CD4-positive, alpha-beta memory T cell (primary cell): ENCODE measurements at regions of chr1 and their contacts with region 1.

Region 1: GRCh38 chr1:169711469-169712281 is at the start of gene SELL:
- DNase-seq: peak; percentile 75 to 83 (median 78)
- H3K4me3 ChIP-seq: peak within 1 kb of the TSS; percentile 55 to 61
- H3K4me3 Mint-ChIP-seq: peak within 1 kb of the TSS; percentile 87 to 96 (median 92)
- H3K27ac ChIP-seq: peak within 1 kb of the TSS; percentile 48
- H3K27ac Mint-ChIP-seq: peak within 1 kb of the TSS; percentile 70 to 95 (median 86)
- H3K4me1 ChIP-seq: peaks cover 18% of the 10 kb centered on the region
- H3K4me1 Mint-ChIP-seq: peaks cover 16 to 28% (median 24%) of the 10 kb centered on the region in 4 donors
- H3K27me3 ChIP-seq: no peaks in the 10 kb centered on the region
- H3K27me3 Mint-ChIP-seq: peaks cover 3 to 4% of the 10 kb centered on the region in 2 donors
- total RNA-seq, gene SELL: 378 to 396 TPM

Region 2: GRCh38 chr1:169466259-169467230 is 245.1 kb before region 1 on chr1:
- CTCF ChIA-PET with region 1: interaction called, 3 read pairs
- POLR2A ChIA-PET with region 1: no interaction called
- intact Hi-C with region 1: loop called (anchors 5 kb)
- DNase-seq: peak in 2 of 5 donors; percentile 12 to 24
- H3K4me3 ChIP-seq: no peak overlapping the region
- H3K4me3 Mint-ChIP-seq: no peak overlapping the region
- H3K27ac ChIP-seq: no peak overlapping the region
- H3K27ac Mint-ChIP-seq: peak overlapping the region in 1 of 7 donors; percentile 17
- H3K4me1 ChIP-seq: no peaks in the 10 kb centered on the region
- H3K4me1 Mint-ChIP-seq: no peaks in the 10 kb centered on the region
- H3K27me3 ChIP-seq: no peaks in the 10 kb centered on the region
- H3K27me3 Mint-ChIP-seq: no peaks in the 10 kb centered on the region

Region 3: GRCh38 chr1:169546087-169546995 is 165.3 kb before region 1 on chr1:
- CTCF ChIA-PET with region 1: interaction called, 86 read pairs
- POLR2A ChIA-PET with region 1: interaction called, 12 read pairs
- intact Hi-C with region 1: loop called (anchors 1 kb)
- DNase-seq: peak; percentile 65 to 68 (median 66)
- H3K4me3 ChIP-seq: no peak overlapping the region
- H3K4me3 Mint-ChIP-seq: no peak overlapping the region
- H3K27ac ChIP-seq: no peak overlapping the region
- H3K27ac Mint-ChIP-seq: no peak overlapping the region
- H3K4me1 ChIP-seq: no peaks in the 10 kb centered on the region
- H3K4me1 Mint-ChIP-seq: peaks cover 0 to 2% (median under 1%) of the 10 kb centered on the region in 4 donors
- H3K27me3 ChIP-seq: no peaks in the 10 kb centered on the region
- H3K27me3 Mint-ChIP-seq: no peaks in the 10 kb centered on the region

Region 4: DNA sequence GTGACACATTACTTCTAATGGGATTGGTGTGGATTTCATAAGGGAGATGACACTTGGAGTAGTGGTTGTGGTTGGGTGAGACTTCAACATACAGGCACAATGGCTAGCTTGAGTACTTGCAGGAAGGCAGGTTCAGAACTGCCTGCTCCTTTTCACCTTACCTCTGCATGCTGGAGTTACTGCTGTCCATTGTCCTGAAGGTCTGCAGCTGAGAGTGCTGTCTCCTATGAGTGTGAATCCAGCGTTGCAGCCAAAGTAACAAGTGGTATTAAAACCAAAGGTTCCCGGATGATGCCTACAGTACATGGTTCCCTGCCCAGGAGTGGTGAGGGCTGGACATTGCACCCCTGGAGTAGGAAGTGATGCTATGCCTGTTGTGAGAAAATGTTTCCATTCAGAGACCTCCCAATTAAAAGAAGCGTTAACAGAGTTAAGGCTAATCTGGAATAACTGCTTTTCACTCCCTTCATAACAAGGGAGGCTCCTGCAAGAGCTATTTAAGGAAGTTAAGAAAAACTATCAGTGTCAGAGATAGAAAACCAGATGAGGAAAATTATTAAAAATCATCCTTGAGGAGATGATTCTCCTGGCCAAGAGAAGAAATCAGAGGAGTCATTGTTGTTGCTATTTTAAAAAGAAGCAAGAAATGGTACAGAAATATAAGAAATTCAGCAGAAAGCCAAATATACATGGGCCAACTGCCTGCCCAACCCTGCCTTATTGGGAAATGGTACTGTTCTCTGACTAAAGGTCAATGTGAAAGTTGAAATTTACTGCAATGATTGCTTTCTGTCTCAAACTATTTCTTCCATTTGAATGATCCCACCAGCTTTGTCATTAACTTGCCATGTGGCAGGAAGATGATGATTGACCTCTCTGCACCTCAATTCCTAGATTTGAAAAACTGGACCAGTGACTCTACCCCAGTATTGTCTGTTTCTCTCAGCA is 115.6 kb before region 1 on chr1:
- CTCF ChIA-PET with region 1: interaction called, 246 read pairs
- POLR2A ChIA-PET with region 1: interaction called, 78 read pairs
- intact Hi-C with region 1: loop called (anchors 1 kb)
- DNase-seq: peak in 1 of 5 donors; percentile 9
- H3K4me3 ChIP-seq: no peak overlapping the region
- H3K4me3 Mint-ChIP-seq: no peak overlapping the region
- H3K27ac ChIP-seq: no peak overlapping the region
- H3K27ac Mint-ChIP-seq: no peak overlapping the region
- H3K4me1 ChIP-seq: peaks cover 8% of the 10 kb centered on the region
- H3K4me1 Mint-ChIP-seq: peaks cover 4 to 7% (median 5%) of the 10 kb centered on the region in 4 donors
- H3K27me3 ChIP-seq: no peaks in the 10 kb centered on the region
- H3K27me3 Mint-ChIP-seq: no peaks in the 10 kb centered on the region

Region 5: DNA sequence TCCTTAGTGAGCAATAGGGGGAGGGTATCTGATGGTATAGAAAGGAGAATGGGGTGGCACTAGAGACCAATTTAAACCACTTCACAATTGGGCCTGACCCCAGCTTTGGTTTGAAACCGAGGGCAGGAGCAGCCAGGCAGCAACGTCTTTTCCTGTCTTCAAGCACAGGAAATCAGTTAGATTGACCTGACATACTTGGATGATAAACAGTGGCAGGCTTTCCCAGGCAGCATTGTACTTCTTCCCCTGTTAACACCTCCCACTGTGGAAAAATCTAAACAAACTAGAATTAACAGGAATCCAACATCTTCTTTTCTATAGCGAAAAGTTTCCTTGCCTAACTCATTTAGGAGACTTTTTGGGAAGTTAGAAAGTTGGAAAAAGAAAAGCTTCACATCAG is 40.8 kb before region 1 on chr1:
- CTCF ChIA-PET with region 1: interaction called, 5 read pairs
- POLR2A ChIA-PET with region 1: interaction called, 3 read pairs
- intact Hi-C with region 1: loop called (anchors 1 kb)
- DNase-seq: no peak
- H3K4me3 ChIP-seq: no peak overlapping the region
- H3K4me3 Mint-ChIP-seq: peak overlapping the region in 6 of 8 donors; percentile 25 to 73 (median 30)
- H3K27ac ChIP-seq: no peak overlapping the region
- H3K27ac Mint-ChIP-seq: peak overlapping the region; percentile 66 to 88 (median 81)
- H3K4me1 ChIP-seq: peaks cover 46% of the 10 kb centered on the region
- H3K4me1 Mint-ChIP-seq: peaks cover 36 to 67% (median 55%) of the 10 kb centered on the region in 4 donors
- H3K27me3 ChIP-seq: no peaks in the 10 kb centered on the region
- H3K27me3 Mint-ChIP-seq: no peaks in the 10 kb centered on the region

Region 6: GRCh38 chr1:169765580-169766331 is 54.1 kb after region 1 on chr1:
- CTCF ChIA-PET with region 1: no interaction called
- POLR2A ChIA-PET with region 1: no interaction called
- intact Hi-C with region 1: no loop called
- DNase-seq: no peak
- H3K4me3 ChIP-seq: no peak overlapping the region
- H3K4me3 Mint-ChIP-seq: no peak overlapping the region
- H3K27ac ChIP-seq: no peak overlapping the region
- H3K27ac Mint-ChIP-seq: no peak overlapping the region
- H3K4me1 ChIP-seq: no peaks in the 10 kb centered on the region
- H3K4me1 Mint-ChIP-seq: peaks cover 0 to 1% (median 0%) of the 10 kb centered on the region in 4 donors
- H3K27me3 ChIP-seq: no peaks in the 10 kb centered on the region
- H3K27me3 Mint-ChIP-seq: peaks cover 4 to 5% of the 10 kb centered on the region in 2 donors

Region 7: GRCh38 chr1:169794530-169795416 is 83.1 kb after region 1 on chr1 and contains the start of gene METTL18:
- CTCF ChIA-PET with region 1: interaction called, 3 read pairs
- POLR2A ChIA-PET with region 1: interaction called, 6 read pairs
- intact Hi-C with region 1: loop called (anchors 2 kb)
- DNase-seq: peak; percentile 92 to 95 (median 93)
- H3K4me3 ChIP-seq: peak within 1 kb of the TSS; percentile 90 to 93
- H3K4me3 Mint-ChIP-seq: peak within 1 kb of the TSS; percentile 96 to 100 (median 98)
- H3K27ac ChIP-seq: peak within 1 kb of the TSS; percentile 93
- H3K27ac Mint-ChIP-seq: peak within 1 kb of the TSS; percentile 90 to 100 (median 99)
- H3K4me1 ChIP-seq: peaks cover 30% of the 10 kb centered on the region
- H3K4me1 Mint-ChIP-seq: peaks cover 36 to 56% (median 48%) of the 10 kb centered on the region in 4 donors
- H3K27me3 ChIP-seq: no peaks in the 10 kb centered on the region
- H3K27me3 Mint-ChIP-seq: no peaks in the 10 kb centered on the region
- total RNA-seq, gene METTL18: 21.0 to 23.8 TPM

Region 8: DNA sequence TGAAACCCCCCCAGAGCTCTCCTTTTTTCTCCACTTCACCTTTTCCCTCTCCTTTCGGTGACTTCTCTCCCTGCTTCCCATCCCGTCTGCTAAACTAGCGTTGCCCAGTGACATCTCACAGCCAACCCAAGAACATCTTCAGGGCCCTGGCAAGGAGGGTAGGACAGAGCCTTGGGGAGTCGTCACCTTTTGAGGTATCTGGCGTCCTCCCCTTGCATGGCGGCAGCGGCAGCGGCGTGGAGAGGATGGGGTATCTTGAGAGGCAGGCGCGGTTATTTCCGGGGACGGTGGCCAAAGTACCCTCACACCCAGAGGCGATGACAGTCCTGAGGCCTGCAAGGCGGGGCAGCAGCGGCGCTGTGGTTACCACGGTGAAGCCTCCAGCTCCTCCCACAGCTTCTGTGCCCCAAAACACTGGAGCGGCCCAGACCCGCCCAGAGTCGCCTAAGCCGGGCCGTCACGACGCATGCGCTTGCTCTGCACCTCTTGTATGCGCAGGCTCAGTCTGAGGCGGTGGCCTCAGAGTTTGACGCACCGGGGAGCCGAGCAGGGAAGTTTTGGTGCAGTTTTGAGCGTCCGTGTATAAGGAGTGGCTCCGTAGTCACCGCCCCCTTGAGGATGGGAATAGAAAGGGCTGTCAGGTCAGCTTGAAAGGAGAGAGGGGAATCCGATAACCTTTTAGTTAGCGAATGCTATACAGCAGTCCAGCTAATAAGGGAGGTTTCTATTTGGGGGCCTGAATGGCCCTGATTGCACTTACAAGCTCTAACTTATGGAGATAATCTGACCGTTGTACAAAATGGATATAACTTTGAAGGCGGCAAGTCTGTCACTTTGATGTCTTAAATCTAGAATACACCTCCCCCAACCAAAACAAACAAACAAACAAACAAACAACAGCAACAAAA is 362.8 kb after region 1 on chr1 and contains the start of gene KIFAP3:
- CTCF ChIA-PET with region 1: no interaction called
- POLR2A ChIA-PET with region 1: no interaction called
- intact Hi-C with region 1: no loop called
- DNase-seq: peak; percentile 93 to 97 (median 95)
- H3K4me3 ChIP-seq: peak within 1 kb of the TSS; percentile 71 to 77
- H3K4me3 Mint-ChIP-seq: peak within 1 kb of the TSS; percentile 90 to 98 (median 96)
- H3K27ac ChIP-seq: peak within 1 kb of the TSS; percentile 74
- H3K27ac Mint-ChIP-seq: peak within 1 kb of the TSS; percentile 85 to 99 (median 97)
- H3K4me1 ChIP-seq: peaks cover 44% of the 10 kb centered on the region
- H3K4me1 Mint-ChIP-seq: peaks cover 39 to 61% (median 47%) of the 10 kb centered on the region in 4 donors
- H3K27me3 ChIP-seq: no peaks in the 10 kb centered on the region
- H3K27me3 Mint-ChIP-seq: peaks cover 0 to 2% of the 10 kb centered on the region in 2 donors
- total RNA-seq, gene KIFAP3: 20.2 to 22.2 TPM